Gastrocnemius medialis (tissue), 4 donors: ENCODE measurements at regions of chr16 and their contacts with region 1.

Region 1: GRCh38 chr16:77190478-77191258 is at the start of gene MON1B:
- DNase-seq: peak; percentile 98 to 99
- ATAC-seq: peak; percentile 98
- H3K4me3 ChIP-seq: peak within 1 kb of the TSS; percentile 80 to 93 (median 90)
- H3K27ac ChIP-seq: peak within 1 kb of the TSS; percentile 93 to 96 (median 95)
- H3K4me1 ChIP-seq: peaks cover 12 to 15% of the 10 kb centered on the region in 2 donors
- H3K27me3 ChIP-seq: no peaks in the 10 kb centered on the region
- CTCF ChIP-seq: no peak
- POLR2A ChIP-seq: peak; percentile 48 to 72
- total RNA-seq, gene MON1B: 6.6 to 14.6 (median 10.6) TPM

Region 2: GRCh38 chr16:75647492-75648264 is 1543.0 kb before region 1 on chr16 and contains the starts of genes KARS1 and TERF2IP:
- in situ Hi-C with region 1: no loop called
- intact Hi-C with region 1: loop called (anchors 5 kb)
- DNase-seq: peak; percentile 93 to 94
- ATAC-seq: peak; percentile 92
- H3K4me3 ChIP-seq: peak within 1 kb of the TSS; percentile 85 to 99 (median 92)
- H3K27ac ChIP-seq: peak within 1 kb of the TSS; percentile 95 to 98 (median 97)
- H3K4me1 ChIP-seq: peaks cover 58 to 59% of the 10 kb centered on the region in 2 donors
- H3K27me3 ChIP-seq: no peaks in the 10 kb centered on the region
- CTCF ChIP-seq: no peak
- POLR2A ChIP-seq: peak; percentile 97
- total RNA-seq, gene KARS1: 183 to 251 (median 206) TPM
- total RNA-seq, gene TERF2IP: 44.5 to 73.6 (median 69.7) TPM

Region 3: DNA sequence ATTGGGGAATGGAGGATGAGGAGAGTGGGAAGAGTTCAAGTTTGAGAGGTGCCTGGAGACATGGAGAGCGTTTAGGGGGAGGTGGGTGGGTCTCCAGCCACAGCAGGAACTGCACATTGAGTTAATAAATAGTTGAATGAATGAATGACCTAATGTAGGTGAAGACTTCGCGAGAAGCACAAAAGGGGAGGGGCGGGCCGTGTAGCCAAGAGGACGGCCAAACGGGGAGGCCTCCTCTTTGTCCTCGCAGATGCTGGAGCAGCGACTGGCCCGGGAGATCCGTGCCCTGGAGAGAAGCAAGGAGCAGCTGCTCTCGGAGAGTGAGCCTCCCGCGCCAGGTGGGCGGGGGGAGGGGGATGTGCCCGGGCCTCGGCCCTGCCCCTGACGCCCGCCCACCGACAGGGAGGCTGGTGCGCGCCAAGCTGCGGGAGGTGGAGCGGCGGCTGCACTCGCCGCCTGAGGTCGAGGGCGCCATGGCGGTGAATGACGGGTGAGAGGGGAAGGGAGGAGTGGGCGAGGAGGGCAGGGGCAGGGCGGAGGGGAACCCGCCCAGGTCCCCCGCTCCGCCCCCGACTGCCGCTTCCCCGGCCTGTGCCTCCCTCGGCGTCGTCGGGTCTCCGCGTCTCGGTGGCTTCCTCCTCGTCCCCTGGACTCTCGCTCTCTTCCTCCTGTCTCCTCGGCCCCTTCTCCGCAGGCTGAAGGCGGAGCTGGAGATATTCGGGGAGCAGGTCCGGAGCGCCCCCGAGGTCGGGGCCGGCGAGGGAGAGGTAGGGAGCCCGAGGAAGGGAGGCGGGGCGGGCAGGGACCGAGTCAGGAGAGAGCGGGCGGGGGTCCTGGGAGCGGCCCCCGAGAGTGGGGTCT is 21.4 kb after region 1 on chr16:
- in situ Hi-C with region 1: no loop called
- intact Hi-C with region 1: loop called (anchors 2 kb)
- DNase-seq: no peak
- ATAC-seq: peak; percentile 24 to 38
- H3K4me3 ChIP-seq: peak overlapping the region; percentile 62 to 80 (median 68)
- H3K27ac ChIP-seq: peak overlapping the region; percentile 51 to 70 (median 62)
- H3K4me1 ChIP-seq: peaks cover 0 to 14% of the 10 kb centered on the region in 2 donors
- H3K27me3 ChIP-seq: peaks cover 13 to 25% (median 18%) of the 10 kb centered on the region in 3 donors
- CTCF ChIP-seq: no peak
- POLR2A ChIP-seq: peak in 1 of 2 donors; percentile 24

Region 4: GRCh38 chr16:77531752-77532151 is 341.1 kb after region 1 on chr16:
- in situ Hi-C with region 1: no loop called
- intact Hi-C with region 1: no loop called
- DNase-seq: no peak
- ATAC-seq: no peak
- H3K4me3 ChIP-seq: no peak overlapping the region
- H3K27ac ChIP-seq: no peak overlapping the region
- H3K4me1 ChIP-seq: no peaks in the 10 kb centered on the region
- H3K27me3 ChIP-seq: no peaks in the 10 kb centered on the region
- CTCF ChIP-seq: no peak
- POLR2A ChIP-seq: no peak

Region 5: DNA sequence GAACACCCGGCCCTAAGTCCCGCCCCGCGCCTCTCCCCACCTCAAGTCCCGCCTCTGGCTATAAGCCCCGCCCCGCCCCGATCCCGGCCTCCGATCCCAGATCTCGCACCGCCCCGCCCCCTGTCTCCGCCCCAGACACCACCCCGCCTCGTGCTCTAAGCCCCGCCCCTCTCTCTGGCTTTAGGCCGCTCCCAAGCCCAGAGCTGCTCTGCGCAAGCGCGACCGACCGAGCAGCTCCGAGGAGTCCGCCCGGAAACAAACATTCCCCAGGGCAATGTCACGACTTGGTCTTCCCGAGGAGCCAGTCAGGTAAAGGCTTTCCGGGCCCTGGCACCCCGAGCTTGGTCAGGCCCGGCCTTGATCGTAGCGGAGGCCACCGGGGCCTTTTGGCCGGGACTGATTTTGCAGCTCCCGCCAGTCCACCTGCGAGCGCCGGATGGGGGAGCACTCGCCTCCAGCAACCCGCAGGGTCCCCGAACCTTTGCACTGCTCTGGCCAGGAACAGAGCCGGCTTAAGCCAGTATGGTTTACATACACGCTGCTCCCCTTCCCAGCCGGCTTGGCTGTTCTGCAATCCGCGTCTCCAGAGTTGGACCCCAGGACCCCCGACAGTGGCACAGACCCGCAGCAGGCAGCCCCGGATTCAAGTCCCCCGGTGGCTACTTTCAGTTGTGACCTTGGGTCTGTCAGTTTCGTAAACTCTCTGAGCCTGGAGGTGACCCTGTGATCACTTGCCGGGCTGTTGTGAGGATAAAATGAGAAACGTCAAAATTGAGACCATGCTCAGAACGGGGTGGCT is 531.8 kb after region 1 on chr16 and contains the start of gene NUDT7:
- in situ Hi-C with region 1: no loop called
- intact Hi-C with region 1: loop called (anchors 5 kb)
- DNase-seq: peak; percentile 96 to 97
- ATAC-seq: peak; percentile 98 to 99
- H3K4me3 ChIP-seq: peak within 1 kb of the TSS; percentile 71 to 99 (median 84)
- H3K27ac ChIP-seq: peak within 1 kb of the TSS; percentile 85 to 87 (median 86)
- H3K4me1 ChIP-seq: peaks cover 5 to 6% of the 10 kb centered on the region in 2 donors
- H3K27me3 ChIP-seq: no peaks in the 10 kb centered on the region
- CTCF ChIP-seq: no peak
- POLR2A ChIP-seq: peak; percentile 38 to 40
- total RNA-seq, gene NUDT7: 2.3 to 11.0 (median 3.4) TPM